Activated CD4-positive, alpha-beta T cell treated with anti-CD3 and anti-CD28 coated beads for 36 hours (primary cell): ENCODE measurements at regions of chr10 and their contacts with region 1.

Region 1: GRCh38 chr10:68348265-68348741 is 15.6 kb upstream of the PBLD start:
- DNase-seq: peak; percentile 63
- ATAC-seq: peak; percentile 73
- H3K4me3 Mint-ChIP-seq: no peak overlapping the region
- H3K27ac Mint-ChIP-seq: peak overlapping the region; percentile 51
- H3K4me1 Mint-ChIP-seq: peaks cover 7% of the 10 kb centered on the region
- H3K27me3 Mint-ChIP-seq: no peaks in the 10 kb centered on the region

Region 2: DNA sequence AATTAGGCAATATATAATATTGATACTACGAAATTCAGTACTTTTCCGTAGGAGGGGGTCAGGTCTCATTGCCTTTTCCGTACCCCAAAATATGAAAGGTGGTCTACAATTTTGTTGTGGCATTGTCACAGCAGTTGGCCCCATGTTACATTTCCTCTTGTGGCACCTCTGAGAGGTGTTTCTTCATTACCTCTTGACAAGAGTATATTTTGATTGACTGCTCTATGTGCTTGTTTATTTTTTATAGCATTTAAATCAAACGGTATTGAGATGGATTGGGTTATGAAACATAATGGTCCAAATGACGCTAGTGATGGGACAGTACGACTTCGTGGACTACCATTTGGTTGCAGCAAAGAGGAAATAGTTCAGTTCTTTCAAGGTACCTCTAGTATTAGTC is 11.4 kb before region 1 on chr10:
- CTCF ChIA-PET with region 1: interaction called, 13 read pairs
- POLR2A ChIA-PET with region 1: interaction called, 29 read pairs
- intact Hi-C with region 1: loop called in 1 of 2 experiments (anchors 1 kb)
- DNase-seq: no peak
- ATAC-seq: no peak
- H3K4me3 Mint-ChIP-seq: peak overlapping the region; percentile 97
- H3K27ac Mint-ChIP-seq: peak overlapping the region; percentile 82
- H3K4me1 Mint-ChIP-seq: peaks cover 41% of the 10 kb centered on the region
- H3K27me3 Mint-ChIP-seq: no peaks in the 10 kb centered on the region

Region 3: GRCh38 chr10:68362590-68362989 is 14.3 kb after region 1 on chr10:
- CTCF ChIA-PET with region 1: interaction called, 11 read pairs
- POLR2A ChIA-PET with region 1: interaction called, 3 read pairs
- intact Hi-C with region 1: no loop called
- DNase-seq: no peak
- ATAC-seq: no peak
- H3K4me3 Mint-ChIP-seq: no peak overlapping the region
- H3K27ac Mint-ChIP-seq: no peak overlapping the region
- H3K4me1 Mint-ChIP-seq: no peaks in the 10 kb centered on the region
- H3K27me3 Mint-ChIP-seq: no peaks in the 10 kb centered on the region

Region 4: GRCh38 chr10:68633816-68634466 is 285.6 kb after region 1 on chr10:
- CTCF ChIA-PET with region 1: no interaction called
- POLR2A ChIA-PET with region 1: no interaction called
- intact Hi-C with region 1: no loop called
- DNase-seq: no peak
- ATAC-seq: no peak
- H3K4me3 Mint-ChIP-seq: no peak overlapping the region
- H3K27ac Mint-ChIP-seq: peak overlapping the region; percentile 4
- H3K4me1 Mint-ChIP-seq: peaks cover 2% of the 10 kb centered on the region
- H3K27me3 Mint-ChIP-seq: no peaks in the 10 kb centered on the region

Region 5: GRCh38 chr10:68837608-68838322 is 489.5 kb after region 1 on chr10:
- CTCF ChIA-PET with region 1: no interaction called
- POLR2A ChIA-PET with region 1: no interaction called
- intact Hi-C with region 1: no loop called
- DNase-seq: no peak
- ATAC-seq: no peak
- H3K4me3 Mint-ChIP-seq: no peak overlapping the region
- H3K27ac Mint-ChIP-seq: no peak overlapping the region
- H3K4me1 Mint-ChIP-seq: no peaks in the 10 kb centered on the region
- H3K27me3 Mint-ChIP-seq: no peaks in the 10 kb centered on the region